Activated naive CD4-positive, alpha-beta T cell treated with anti-CD3 and anti-CD28 coated beads for 36 hours (primary cell): ENCODE measurements at regions of chr1 and their contacts with region 1.

Region 1: GRCh38 chr1:220879076-220879508 is at the start of gene HLX:
- DNase-seq: peak; percentile 31
- H3K4me3 Mint-ChIP-seq: peak within 1 kb of the TSS; percentile 63
- H3K27ac Mint-ChIP-seq: no peak within 1 kb of the TSS
- H3K4me1 Mint-ChIP-seq: peaks cover 37% of the 10 kb centered on the region
- H3K27me3 Mint-ChIP-seq: peaks cover 73% of the 10 kb centered on the region
- total RNA-seq, gene HLX: 0.12 TPM in 1 of 2 experiments, not detected in the other

Region 2: GRCh38 chr1:220810179-220810653 is 68.9 kb before region 1 on chr1:
- CTCF ChIA-PET with region 1: no interaction called
- intact Hi-C with region 1: loop called (anchors 2 kb)
- DNase-seq: peak; percentile 81
- H3K4me3 Mint-ChIP-seq: peak overlapping the region; percentile 22
- H3K27ac Mint-ChIP-seq: no peak overlapping the region
- H3K4me1 Mint-ChIP-seq: peaks cover 3% of the 10 kb centered on the region
- H3K27me3 Mint-ChIP-seq: peaks cover 21% of the 10 kb centered on the region

Region 3: DNA sequence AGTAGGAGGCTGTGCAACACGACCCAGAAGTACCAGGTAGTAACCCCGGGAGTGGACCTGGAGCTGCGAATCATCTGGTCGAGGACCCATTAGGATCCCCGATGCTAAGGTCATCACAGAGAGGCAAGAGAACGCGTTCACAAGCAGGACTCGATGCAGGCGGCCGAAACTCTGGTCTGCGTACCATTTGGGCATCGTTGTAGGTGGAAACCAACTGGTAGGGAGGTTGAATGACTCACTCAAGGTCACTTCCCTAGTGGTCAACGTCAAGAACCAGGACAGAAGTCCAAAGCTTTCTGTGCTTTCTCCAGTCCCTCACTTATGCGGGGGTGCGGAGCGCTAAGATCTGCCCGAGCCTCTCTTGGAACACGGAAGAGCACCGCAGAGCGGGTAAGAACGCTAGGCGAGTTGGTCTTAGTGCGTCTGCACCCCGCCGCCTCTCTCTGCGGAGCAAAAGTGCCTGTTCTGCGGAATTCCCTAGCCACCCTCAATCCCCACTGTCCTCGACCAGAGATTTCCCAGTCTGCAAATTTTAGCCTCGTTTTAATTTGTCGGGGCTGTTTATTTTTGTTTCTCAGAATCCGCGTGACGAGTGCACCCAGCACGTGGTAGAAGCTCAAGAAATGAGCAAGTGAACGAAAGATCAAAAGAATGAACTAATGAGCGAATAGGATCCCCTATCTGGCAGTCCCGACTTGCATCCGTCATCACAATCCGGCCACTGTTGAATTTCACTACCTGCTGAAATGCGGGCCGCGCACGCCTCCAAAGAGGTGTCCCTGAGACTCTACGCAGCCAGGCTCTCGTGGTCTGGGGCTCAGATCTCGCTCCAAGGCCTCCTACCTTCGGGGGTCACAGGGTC is 12.4 kb after region 1 on chr1:
- CTCF ChIA-PET with region 1: interaction called, 3 read pairs
- intact Hi-C with region 1: loop called (anchors 2 kb)
- DNase-seq: no peak
- H3K4me3 Mint-ChIP-seq: no peak overlapping the region
- H3K27ac Mint-ChIP-seq: no peak overlapping the region
- H3K4me1 Mint-ChIP-seq: peaks cover 14% of the 10 kb centered on the region
- H3K27me3 Mint-ChIP-seq: peaks cover 87% of the 10 kb centered on the region